ENCODE measurements at regions of chr16 and their contacts with region 1.

Region 1: GRCh38 chr16:74623214-74623842 is 16.4 kb upstream of the GLG1 start:
- DNase-seq: peak; percentile 57 to 68
- ATAC-seq: peak; percentile 69 to 75; a peak in 5 of 6 replicates
- H3K4me3 ChIP-seq: no peak overlapping the region
- H3K27ac ChIP-seq: no peak overlapping the region
- H3K4me1 ChIP-seq: no peaks in the 10 kb centered on the region
- CTCF ChIP-seq: peak; percentile 79
- EP300 ChIP-seq: no peak
- POLR2A ChIP-seq: no peak
- RAD21 ChIP-seq: peak; percentile 61 to 72

Region 2: GRCh38 chr16:74611721-74612120 is 11.6 kb before region 1 on chr16:
- CTCF ChIA-PET with region 1: interaction called, 23 read pairs
- POLR2A ChIA-PET with region 1: interaction called, 5 read pairs
- DNase-seq: no peak
- ATAC-seq: no peak
- H3K4me3 ChIP-seq: no peak overlapping the region
- H3K27ac ChIP-seq: no peak overlapping the region
- H3K4me1 ChIP-seq: 0 out of 3 replicates have a peak, but pooled peaks cover 3% of the 10 kb centered on the region
- CTCF ChIP-seq: no peak
- EP300 ChIP-seq: no peak
- POLR2A ChIP-seq: no peak
- RAD21 ChIP-seq: no peak

Region 3: DNA sequence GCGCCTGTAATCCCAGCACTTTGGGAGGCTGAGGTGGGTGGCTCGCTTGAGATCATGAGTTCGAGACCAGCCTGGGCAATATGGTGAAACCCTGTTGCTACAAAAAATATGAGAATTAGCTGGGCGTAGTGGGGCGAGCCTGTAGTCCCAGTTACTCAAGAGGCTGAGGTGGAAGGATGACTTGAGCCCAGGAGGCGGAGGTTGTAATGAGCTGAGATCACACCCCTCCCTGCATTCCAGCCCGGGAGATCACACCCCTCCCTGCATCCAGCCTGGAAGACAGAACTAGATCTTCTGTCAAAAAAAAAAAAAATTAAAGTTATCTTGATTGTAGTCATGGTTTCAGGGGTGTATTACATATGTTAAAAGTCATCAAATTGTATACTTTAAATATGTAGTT is 10.4 kb after region 1 on chr16:
- CTCF ChIA-PET with region 1: interaction called, 31 read pairs
- POLR2A ChIA-PET with region 1: interaction called, 5 read pairs
- DNase-seq: no peak
- ATAC-seq: no peak
- H3K4me3 ChIP-seq: no peak overlapping the region
- H3K27ac ChIP-seq: no peak overlapping the region
- H3K4me1 ChIP-seq: no peaks in the 10 kb centered on the region
- CTCF ChIP-seq: no peak
- EP300 ChIP-seq: no peak
- POLR2A ChIP-seq: no peak
- RAD21 ChIP-seq: no peak